ENCODE measurements at regions of chr11 and their contacts with region 1.

Region 1: DNA sequence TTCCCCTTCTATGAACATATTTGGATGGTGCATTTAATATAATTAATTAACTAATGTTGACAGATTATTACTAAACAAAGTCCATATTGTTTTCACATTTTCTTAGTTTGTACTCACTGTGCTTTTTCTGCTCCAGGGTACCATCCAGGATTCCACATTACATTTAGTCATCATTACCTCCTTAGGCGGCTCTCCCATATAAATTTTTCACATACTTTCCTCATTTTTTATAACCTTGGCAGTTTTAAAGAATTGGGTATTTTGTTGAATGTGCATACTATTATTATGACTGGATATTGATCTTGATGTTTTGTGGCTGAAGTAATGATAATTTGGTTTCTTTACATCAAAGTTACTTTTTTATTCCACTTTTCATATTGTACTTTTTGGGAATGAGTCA is 755.6 kb upstream of the ANO3 start:
- DNase-seq: no peak
- ATAC-seq: no peak
- H3K4me3 ChIP-seq: no peak overlapping the region
- H3K27ac ChIP-seq: no peak overlapping the region
- H3K4me1 ChIP-seq: no peaks in the 10 kb centered on the region
- H3K27me3 ChIP-seq: no peaks in the 10 kb centered on the region
- CTCF ChIP-seq: no peak

Region 2: GRCh38 chr11:25612806-25613205 is 36.5 kb after region 1 on chr11:
- intact Hi-C with region 1: loop called in 1 of 3 experiments (anchors 5 kb)
- DNase-seq: no peak
- ATAC-seq: no peak
- H3K4me3 ChIP-seq: no peak overlapping the region
- H3K27ac ChIP-seq: no peak overlapping the region
- H3K4me1 ChIP-seq: no peaks in the 10 kb centered on the region
- H3K27me3 ChIP-seq: no peaks in the 10 kb centered on the region
- CTCF ChIP-seq: no peak

Measured in pancreas (tissue), 10 donors.